PC-3 (cell line): ENCODE measurements at regions of chr2 and their contacts with region 1.

Region 1: DNA sequence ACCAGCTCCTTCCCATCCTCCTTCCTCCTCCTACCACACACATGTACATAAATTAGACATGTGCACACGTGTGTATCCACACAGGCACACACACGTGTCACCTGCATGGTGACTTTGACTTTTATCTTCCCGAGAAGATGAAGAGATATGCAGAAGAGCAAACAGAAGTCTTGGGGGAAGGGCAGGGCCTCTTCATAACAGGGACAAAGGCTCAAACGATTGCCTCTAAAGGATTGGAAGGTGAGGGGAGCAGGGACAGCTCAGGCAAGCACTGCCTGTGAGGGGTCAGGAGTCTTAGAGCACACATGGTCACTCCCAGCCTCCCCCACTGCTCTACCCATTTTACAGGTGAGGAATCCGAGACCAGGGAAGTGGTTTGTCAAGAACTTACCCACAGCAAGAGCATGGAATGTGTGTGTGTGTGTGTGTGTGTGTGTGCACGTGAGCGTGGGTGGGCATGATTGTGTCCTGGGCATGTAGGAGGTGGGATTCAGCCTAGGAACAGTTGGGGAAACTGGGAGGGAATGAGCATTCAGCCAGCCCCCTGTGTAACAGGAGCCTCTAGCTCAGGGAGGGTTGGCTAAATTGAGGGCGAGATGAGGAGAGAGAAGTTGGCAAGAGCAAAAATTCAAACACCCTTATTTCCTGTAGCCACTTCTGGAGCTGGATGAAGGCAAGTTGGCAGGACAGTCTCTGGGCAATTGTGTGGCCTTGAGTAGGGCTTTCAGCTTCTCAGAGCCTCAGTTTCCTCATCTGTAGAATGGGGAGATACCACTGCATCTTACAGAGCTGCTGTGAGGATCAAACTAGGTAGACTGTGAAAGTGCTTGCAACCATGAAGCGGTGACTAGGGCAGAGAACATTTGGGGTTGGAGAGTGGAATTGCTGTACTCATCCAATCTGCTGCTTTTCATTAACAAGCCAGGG is 24.2 kb downstream of the CIB4 start:
- DNase-seq: no peak
- ATAC-seq: no peak
- H3K4me3 ChIP-seq: no peak overlapping the region
- H3K27ac ChIP-seq: no peak overlapping the region
- H3K4me1 ChIP-seq: no peaks in the 10 kb centered on the region
- H3K27me3 ChIP-seq: no peaks in the 10 kb centered on the region; the same call in 1 of the 2 replicates
- CTCF ChIP-seq: no peak

Region 2: DNA sequence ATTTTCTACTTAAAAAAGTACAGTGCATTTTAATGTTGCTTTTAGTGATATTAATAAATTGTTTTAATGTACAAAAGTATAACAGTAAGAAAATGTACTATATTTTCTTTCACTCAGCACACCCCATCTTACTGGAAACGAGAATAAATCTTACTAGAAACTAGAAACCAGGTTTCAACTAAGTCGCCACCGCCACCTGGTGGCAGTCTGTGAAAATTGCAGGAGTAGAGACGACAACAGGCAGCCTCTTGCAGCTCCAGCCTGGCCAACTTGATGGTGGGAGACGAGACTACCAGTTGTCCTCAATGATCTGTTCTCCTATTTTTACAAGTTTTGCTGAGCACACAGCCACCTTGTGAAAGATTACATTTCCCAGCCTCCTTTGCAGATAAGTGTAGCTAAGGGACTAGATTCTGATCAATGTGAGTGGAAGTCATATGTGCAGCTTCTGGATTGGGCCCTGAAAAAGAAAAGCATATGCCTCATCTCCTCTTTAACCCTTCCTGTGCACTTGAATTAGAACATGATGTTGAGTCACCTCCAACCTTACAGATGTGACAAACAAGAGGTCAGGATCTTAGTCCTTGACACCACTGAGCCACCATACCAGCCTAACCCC is 147.8 kb before region 1 on chr2:
- CTCF ChIA-PET with region 1: no interaction called
- POLR2A ChIA-PET with region 1: no interaction called
- intact Hi-C with region 1: no loop called
- DNase-seq: peak; percentile 91
- ATAC-seq: peak; percentile 76
- H3K4me3 ChIP-seq: no peak overlapping the region
- H3K27ac ChIP-seq: no peak overlapping the region
- H3K4me1 ChIP-seq: no peaks in the 10 kb centered on the region
- H3K27me3 ChIP-seq: no peaks in the 10 kb centered on the region
- CTCF ChIP-seq: peak; percentile 91

Region 3: GRCh38 chr2:26764078-26764887 is 147.3 kb after region 1 on chr2 and contains the start of gene SLC35F6:
- CTCF ChIA-PET with region 1: no interaction called
- POLR2A ChIA-PET with region 1: interaction called, 12 read pairs
- intact Hi-C with region 1: no loop called
- DNase-seq: peak; percentile 75
- ATAC-seq: peak; percentile 91
- H3K4me3 ChIP-seq: peak within 1 kb of the TSS; percentile 89
- H3K27ac ChIP-seq: 0 out of 2 replicates have a peak within 1 kb of the TSS, but pooled peaks have one; percentile 2
- H3K4me1 ChIP-seq: peaks cover 18% of the 10 kb centered on the region
- H3K27me3 ChIP-seq: no peaks in the 10 kb centered on the region
- CTCF ChIP-seq: no peak
- total RNA-seq, gene SLC35F6: 33.9 and 43.8 TPM in 2 replicates